ENCODE measurements at regions of chr15 and their contacts with region 1.

Region 1: DNA sequence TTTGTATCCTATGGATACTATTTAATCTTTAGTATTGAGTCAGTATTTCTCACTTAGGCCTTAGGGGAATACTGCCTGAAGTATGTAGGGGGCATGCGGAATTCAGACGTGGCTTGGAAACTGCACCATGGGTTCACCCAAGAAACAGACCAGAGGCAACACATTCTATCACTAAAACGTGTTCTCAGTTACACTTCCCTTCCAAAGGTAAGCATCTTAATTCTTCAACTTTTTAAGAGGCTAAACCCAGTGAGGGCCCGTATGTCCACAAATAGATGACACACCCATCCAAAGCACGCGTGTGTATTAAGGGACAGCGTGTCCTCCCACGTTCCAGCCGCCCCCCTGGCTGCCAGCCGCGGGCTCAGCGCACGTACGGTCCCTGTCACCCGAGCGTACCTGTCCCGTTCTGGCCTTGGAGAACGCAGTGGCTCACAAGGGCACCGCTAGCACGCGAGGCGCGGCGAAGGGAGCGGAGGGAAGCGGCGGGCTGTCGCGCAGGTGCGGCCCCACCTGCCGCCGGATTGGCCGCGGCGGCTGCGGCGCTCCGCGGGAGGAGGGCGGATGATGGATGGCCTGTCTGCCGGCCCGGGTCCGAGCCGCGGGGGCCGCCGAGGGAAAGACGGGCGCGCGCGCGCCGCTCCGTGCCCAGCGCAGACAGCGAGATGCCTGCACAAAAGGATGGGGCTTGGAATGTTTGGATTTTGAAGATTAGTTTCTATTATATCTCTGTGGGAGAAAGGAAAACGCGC is 1003.9 kb upstream of the NR2F2 start:
- DNase-seq: peak; percentile 70 to 84 (median 78)
- H3K4me3 ChIP-seq: peak overlapping the region; percentile 56
- H3K27ac ChIP-seq: peak overlapping the region; percentile 84 to 98
- H3K4me1 ChIP-seq: peaks cover 4% of the 10 kb centered on the region
- H3K27me3 ChIP-seq: no peaks in the 10 kb centered on the region
- CTCF ChIP-seq: no peak
- EP300 ChIP-seq: peak; percentile 17
- POLR2A ChIP-seq: peak; percentile 8

Region 2: GRCh38 chr15:95284933-95285421 is 41.6 kb before region 1 on chr15:
- intact Hi-C with region 1: loop called in 2 of 4 experiments (anchors 5 kb)
- DNase-seq: peak in 2 of 5 donors; percentile 29 to 44
- H3K4me3 ChIP-seq: no peak overlapping the region
- H3K27ac ChIP-seq: peak overlapping the region in 1 of 2 donors; percentile 64
- H3K4me1 ChIP-seq: peaks cover 12% of the 10 kb centered on the region
- H3K27me3 ChIP-seq: no peaks in the 10 kb centered on the region
- CTCF ChIP-seq: peak in 1 of 3 donors; percentile 39
- EP300 ChIP-seq: no peak
- POLR2A ChIP-seq: no peak

Region 3: GRCh38 chr15:95464509-95464908 is 137.9 kb after region 1 on chr15:
- intact Hi-C with region 1: loop called in 3 of 4 experiments (anchors 5 to 10 kb)
- DNase-seq: peak; percentile 57 to 83 (median 77)
- H3K4me3 ChIP-seq: no peak overlapping the region
- H3K27ac ChIP-seq: peak overlapping the region in 1 of 2 donors; percentile 77
- H3K4me1 ChIP-seq: peaks cover 11% of the 10 kb centered on the region
- H3K27me3 ChIP-seq: no peaks in the 10 kb centered on the region
- CTCF ChIP-seq: no peak
- EP300 ChIP-seq: no peak
- POLR2A ChIP-seq: no peak

Region 4: DNA sequence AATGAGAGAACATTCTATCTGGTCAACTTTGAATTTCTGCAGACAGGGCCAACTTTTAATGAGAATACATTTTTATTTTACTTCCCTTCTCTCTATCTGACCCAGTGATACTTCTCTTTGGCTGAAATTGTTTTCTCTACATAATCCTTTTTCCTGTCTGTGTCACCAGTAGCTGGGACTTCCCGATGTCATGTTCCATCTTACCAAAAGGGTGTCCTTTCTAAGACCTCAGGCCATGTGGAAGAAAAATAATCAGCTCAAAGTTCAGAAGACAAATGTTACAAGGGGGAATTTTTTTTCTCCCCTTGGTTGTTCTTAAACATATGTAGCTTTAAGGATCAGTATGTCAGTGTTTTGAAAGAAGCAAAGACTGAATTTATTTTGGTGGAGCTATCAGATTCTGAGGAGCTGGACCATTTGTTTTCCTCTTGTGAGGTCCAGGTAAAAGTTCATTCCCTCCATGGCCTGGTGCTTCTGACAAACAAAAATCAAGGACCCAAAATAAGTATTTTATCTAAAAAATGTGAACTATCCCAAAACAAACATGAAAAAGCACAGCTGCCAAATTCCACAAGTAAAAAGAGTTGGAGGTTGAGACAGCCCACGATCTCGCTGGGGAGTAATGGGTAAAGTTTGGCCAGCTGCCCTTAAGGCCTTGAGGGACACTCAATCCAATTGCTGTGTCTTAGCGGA is 144.5 kb after region 1 on chr15:
- intact Hi-C with region 1: loop called in 3 of 4 experiments (anchors 5 to 10 kb)
- DNase-seq: peak in 3 of 5 donors; percentile 58 to 67 (median 63)
- H3K4me3 ChIP-seq: no peak overlapping the region
- H3K27ac ChIP-seq: peak overlapping the region; percentile 26 to 77
- H3K4me1 ChIP-seq: peaks cover 12% of the 10 kb centered on the region
- H3K27me3 ChIP-seq: no peaks in the 10 kb centered on the region
- CTCF ChIP-seq: no peak
- EP300 ChIP-seq: no peak
- POLR2A ChIP-seq: no peak

Region 5: DNA sequence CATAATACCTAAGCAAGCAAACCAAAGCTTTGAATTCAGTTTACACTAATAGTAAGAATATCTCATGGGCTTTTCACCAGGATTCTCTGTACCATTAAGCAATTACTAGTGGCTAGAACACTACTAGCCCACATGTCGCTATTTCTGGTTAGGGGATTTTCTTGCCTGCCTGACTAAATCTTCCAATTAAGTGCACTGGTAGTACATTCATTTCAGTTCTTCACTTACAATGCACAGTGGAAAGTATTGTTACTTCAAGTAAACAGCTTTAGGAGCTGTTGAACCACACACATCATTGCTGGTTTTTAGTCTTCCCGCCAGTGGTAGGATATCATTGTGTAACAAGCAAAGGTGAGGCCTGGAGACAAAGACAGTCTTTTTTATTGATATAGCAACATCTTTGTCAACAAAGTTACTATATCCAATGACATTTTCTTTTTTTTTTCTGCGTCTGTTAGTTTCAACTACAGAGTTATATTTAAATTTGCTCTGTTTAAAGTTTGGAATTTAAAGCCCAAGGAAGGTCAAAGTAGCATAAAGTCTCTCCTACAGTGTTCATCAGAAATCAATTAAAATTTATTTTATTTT is 177.1 kb after region 1 on chr15:
- intact Hi-C with region 1: no loop called
- DNase-seq: no peak
- H3K4me3 ChIP-seq: no peak overlapping the region
- H3K27ac ChIP-seq: no peak overlapping the region
- H3K4me1 ChIP-seq: peaks cover 1% of the 10 kb centered on the region
- H3K27me3 ChIP-seq: no peaks in the 10 kb centered on the region
- CTCF ChIP-seq: no peak
- EP300 ChIP-seq: no peak
- POLR2A ChIP-seq: no peak

Measured in ovary (tissue), 10 donors.